Endothelial cell of umbilical vein (primary cell): ENCODE measurements at regions of chr18 and their contacts with region 1.

Region 1: GRCh38 chr18:32072321-32072720 is 19.4 kb upstream of the RNF138 start:
- DNase-seq: peak; percentile 14
- H3K4me3 ChIP-seq: no peak overlapping the region
- H3K27ac ChIP-seq: no peak overlapping the region
- H3K4me1 ChIP-seq: no peaks in the 10 kb centered on the region
- H3K27me3 ChIP-seq: no peaks in the 10 kb centered on the region
- CTCF ChIP-seq: peak; percentile 7 to 34
- POLR2A ChIP-seq: no peak

Region 2: GRCh38 chr18:32060026-32060425 is 12.3 kb before region 1 on chr18:
- CTCF ChIA-PET with region 1: interaction called, 10 read pairs
- POLR2A ChIA-PET with region 1: no interaction called
- dilution Hi-C with region 1: no loop called
- intact Hi-C with region 1: no loop called
- DNase-seq: no peak
- H3K4me3 ChIP-seq: no peak overlapping the region
- H3K27ac ChIP-seq: no peak overlapping the region
- H3K4me1 ChIP-seq: no peaks in the 10 kb centered on the region
- H3K27me3 ChIP-seq: no peaks in the 10 kb centered on the region
- CTCF ChIP-seq: no peak
- POLR2A ChIP-seq: no peak

Region 3: DNA sequence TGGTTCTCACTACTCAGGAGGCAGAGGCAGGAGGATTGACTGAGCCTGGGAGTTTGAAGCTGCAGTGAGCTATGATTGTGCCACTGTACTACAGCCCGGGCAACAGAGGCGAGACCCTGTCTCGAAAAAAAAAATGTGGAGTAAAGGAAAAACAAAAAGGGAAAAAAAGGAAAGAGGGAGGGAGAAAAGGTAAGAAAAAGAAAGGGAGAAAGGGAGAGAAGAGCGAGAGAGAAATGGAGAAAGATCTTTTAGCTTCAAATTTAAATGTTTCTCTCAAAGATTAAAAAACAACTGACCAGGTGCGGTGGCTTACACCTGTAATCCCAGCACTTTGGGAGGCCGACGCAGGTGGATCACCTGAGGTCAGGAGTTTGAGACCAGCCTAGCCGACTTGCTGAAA is 11.5 kb after region 1 on chr18:
- CTCF ChIA-PET with region 1: interaction called, 17 read pairs
- POLR2A ChIA-PET with region 1: no interaction called
- dilution Hi-C with region 1: no loop called
- intact Hi-C with region 1: no loop called
- DNase-seq: no peak
- H3K4me3 ChIP-seq: no peak overlapping the region
- H3K27ac ChIP-seq: no peak overlapping the region
- H3K4me1 ChIP-seq: peaks cover 16% of the 10 kb centered on the region
- H3K27me3 ChIP-seq: no peaks in the 10 kb centered on the region
- CTCF ChIP-seq: no peak
- POLR2A ChIP-seq: no peak